Caki2 (cell line): ENCODE measurements at regions of chr3 and their contacts with region 1.

Region 1: DNA sequence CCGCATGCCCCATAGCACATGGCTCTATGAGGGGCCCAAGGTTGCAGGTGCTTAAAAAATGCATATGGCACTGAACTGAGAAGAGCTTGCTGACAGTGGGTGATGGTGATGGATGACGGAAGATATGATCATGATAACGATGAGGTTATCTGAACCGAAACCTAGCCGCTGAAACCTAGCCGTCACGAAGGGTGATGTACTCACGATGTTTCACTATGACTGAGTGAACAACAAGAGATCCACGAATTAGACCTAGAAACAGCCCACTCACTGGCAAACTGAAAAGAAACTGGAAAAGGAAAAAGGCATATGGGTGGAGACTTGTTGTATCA is 57.6 kb upstream of the BCL6 start:
- DNase-seq: no peak

Region 2: DNA sequence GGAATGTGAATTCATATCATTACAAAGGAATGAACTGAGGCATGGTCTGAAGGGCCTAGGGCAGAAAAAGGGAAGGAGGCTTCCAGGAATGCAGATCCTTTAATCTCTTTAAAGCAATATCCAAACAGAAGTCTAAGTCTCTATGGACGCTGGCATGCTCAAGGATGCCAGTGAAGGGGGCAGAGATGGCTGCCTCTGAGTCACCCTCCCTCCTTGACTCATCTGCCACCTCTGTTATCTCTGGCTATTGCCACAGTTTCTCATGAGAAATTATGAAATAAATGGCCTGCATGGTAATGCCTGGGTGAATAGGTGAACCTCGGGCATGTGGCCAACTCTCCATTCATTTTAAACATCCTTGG is 38.7 kb after region 1 on chr3:
- in situ Hi-C with region 1: no loop called
- DNase-seq: peak; percentile 85

Region 3: GRCh38 chr3:187919048-187919447 is 116.2 kb after region 1 on chr3:
- in situ Hi-C with region 1: loop called (anchors 25 kb)
- DNase-seq: no peak

Region 4: DNA sequence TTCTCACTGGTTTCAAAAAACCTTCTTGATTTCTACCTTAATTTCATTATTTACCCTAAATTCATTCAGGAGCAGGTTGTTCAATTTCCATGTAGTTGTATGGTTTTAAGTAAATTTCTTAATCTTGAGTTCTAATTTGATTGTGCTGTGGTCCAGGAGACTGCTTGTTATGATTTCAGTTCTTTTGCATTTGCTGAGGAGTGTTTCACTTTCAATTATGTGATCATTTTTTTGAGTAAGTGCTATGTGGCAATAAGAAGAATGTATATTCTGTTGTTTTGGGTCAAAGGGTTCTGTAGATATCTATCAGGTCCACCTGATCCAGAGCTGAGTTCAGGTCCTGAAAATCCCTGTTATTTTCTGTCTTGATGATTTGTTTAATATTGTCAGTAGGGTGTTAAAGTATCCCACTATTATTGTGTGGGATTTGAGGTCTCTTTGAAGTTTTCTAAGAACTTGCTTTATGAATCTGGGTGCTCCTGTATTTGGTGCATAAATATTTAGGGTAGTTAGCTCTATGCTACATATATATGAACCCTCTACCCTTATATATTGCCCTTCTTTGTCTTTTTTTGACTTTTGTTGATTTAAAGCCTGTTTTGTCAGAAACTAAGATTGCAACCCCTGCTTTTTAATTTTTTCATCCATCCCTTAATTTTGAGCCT is 1210.5 kb after region 1 on chr3:
- in situ Hi-C with region 1: no loop called
- DNase-seq: no peak